Dorsolateral prefrontal cortex (tissue), 120 donors: ENCODE measurements at regions of chr7 and their contacts with region 1.

Region 1: DNA sequence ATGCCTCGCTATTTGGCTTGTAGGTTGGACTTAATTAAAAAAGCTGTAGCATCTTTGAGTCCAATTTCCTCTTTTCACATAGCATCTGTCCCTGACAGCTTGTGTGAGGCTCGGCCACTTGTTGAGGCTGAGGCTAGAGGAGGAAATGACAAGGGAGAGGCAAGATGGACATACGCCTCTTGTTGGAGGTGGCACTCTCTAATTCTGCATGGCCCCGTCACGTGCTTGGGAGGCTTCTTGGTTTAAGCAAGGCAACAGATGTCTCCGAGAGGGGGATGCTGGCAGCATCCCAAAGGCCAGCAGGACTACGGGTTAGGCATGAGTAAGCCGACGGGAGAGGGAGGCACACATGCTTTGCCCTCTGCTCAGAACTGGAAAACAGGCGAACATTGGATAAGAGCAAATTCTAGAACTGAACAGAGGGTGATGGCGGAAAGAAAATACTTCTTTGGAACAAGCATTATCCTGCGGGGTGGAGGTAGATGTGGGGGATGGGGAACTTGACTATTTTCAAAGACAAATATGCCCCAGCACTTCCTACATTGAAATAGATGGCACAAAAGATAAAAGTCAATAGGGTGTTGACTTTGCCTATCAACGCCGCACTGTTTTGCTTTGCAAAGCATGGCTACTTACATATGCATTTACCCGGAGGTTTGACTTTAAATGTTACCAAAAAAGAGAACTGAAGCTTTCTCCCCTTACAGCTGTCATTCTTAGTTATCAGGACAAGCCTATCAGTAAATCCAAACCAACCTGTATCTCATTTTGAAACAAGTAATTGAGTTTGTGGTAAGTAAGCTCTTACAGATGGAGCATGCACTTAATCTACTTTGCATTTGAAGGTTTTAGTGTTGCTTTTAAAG is 94.8 kb downstream of the CHN2 start:
- DNase-seq: peak; percentile 49 to 98 (median 70)
- H3K4me3 ChIP-seq: peak overlapping the region in 53 of 59 donors; percentile 2 to 63 (median 37)
- H3K27ac ChIP-seq: peak overlapping the region in 58 of 59 donors; percentile 16 to 98 (median 88)
- H3K27me3 ChIP-seq: no peaks in the 10 kb centered on the region
- CTCF ChIP-seq: peak in 2 of 56 donors; percentile 4 to 27

Region 2: DNA sequence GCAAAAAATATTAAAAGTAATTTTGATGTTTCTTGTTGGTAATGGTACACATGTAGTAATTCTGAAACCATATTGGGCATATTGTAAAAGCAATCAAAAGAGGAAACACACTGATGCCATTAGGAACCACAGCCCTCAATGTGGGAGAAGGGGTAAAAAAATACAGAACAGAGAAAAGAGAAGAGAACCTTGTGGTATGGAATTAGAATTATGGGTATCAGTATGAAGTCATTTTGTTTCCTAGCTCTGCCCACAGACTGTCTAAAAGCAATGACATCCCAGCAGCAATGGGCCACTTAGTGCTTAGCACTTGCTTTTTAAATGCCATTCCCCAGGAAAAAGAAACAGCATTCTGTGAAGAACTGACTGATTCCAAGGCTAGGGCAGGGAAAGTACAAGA is 204.6 kb before region 1 on chr7:
- intact Hi-C with region 1: no loop called
- DNase-seq: no peak
- H3K4me3 ChIP-seq: no peak overlapping the region
- H3K27ac ChIP-seq: no peak overlapping the region
- H3K27me3 ChIP-seq: no peaks in the 10 kb centered on the region
- CTCF ChIP-seq: no peak

Region 3: GRCh38 chr7:29328811-29329210 is 39.4 kb after region 1 on chr7:
- intact Hi-C with region 1: loop called in 1 of 2 experiments (anchors 5 kb)
- DNase-seq: no peak
- H3K4me3 ChIP-seq: no peak overlapping the region
- H3K27ac ChIP-seq: peak overlapping the region in 20 of 59 donors; percentile 1 to 100 (median 59)
- H3K27me3 ChIP-seq: no peaks in the 10 kb centered on the region
- CTCF ChIP-seq: no peak